CD4-positive, alpha-beta memory T cell (primary cell): ENCODE measurements at regions of chr10 and their contacts with region 1.

Region 1: DNA sequence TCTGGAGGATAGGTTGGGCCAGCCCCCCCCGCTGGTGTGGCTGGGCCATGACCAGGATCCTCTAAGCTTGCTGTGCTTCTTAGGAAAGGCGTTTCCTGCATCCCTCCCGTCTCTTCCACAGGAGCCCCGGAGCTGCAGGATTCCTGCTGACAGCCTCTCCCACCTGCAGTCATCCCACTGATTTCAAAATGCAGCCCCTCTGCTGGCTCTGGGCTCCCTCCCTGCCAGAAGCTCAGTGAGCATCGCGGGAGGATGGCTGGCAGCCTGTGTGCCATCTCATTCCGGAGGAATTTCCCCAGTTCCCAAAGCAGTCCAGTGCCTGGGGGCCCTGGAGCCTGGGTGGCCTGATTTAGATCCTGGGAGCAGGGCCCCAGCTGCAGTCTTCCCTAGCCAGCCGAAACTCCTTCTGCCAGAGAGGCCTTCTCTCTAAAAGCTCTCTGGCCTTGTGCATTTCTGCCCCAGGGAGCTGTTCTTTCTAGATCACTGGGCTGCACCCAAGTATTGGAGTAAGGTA is 21.8 kb upstream of the GOLGA7B start:
- DNase-seq: no peak
- H3K4me3 ChIP-seq: no peak overlapping the region
- H3K4me3 Mint-ChIP-seq: no peak overlapping the region
- H3K27ac ChIP-seq: no peak overlapping the region
- H3K27ac Mint-ChIP-seq: peak overlapping the region in 2 of 7 donors; percentile 47 to 66
- H3K4me1 ChIP-seq: peaks cover 28% of the 10 kb centered on the region
- H3K4me1 Mint-ChIP-seq: peaks cover 18 to 34% (median 21%) of the 10 kb centered on the region in 4 donors
- H3K27me3 ChIP-seq: no peaks in the 10 kb centered on the region
- H3K27me3 Mint-ChIP-seq: no peaks in the 10 kb centered on the region

Region 2: DNA sequence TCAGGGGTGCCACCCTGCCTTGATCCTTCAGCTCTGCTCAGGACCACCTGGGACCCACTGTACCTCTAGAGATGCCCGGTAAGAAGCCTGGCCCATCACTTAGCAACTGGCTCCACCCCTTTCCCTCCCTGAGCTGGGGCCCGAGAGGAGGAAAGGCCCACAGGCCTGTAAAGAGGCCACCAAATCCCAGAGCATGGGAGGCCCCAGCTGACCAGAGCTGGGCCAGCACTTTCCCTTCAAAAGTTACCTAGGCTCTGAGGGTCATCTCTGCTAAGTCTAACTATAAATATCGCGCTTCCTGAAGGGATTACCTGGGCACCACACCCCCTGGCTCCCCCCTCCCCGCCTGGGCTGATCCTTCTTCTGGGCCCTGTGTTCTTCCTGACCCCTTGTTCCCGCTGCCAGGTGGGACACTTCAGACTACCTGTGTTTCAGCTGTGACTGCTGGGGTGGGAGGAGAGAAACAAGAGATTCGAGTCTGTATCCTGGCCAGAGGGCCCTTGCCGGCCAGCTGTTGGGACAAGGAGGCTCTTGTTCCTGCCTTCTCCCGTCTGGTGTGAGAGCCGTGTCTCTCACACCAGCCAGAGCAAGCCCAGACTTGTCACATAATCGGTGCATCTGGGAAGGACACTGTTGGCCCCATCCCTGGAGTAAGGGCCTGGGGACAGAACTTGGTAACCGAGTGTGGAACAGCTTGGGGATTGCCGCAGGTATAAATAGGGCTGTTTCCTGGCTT is 278.1 kb before region 1 on chr10:
- CTCF ChIA-PET with region 1: no interaction called
- POLR2A ChIA-PET with region 1: no interaction called
- intact Hi-C with region 1: no loop called
- DNase-seq: no peak
- H3K4me3 ChIP-seq: no peak overlapping the region
- H3K4me3 Mint-ChIP-seq: no peak overlapping the region
- H3K27ac ChIP-seq: no peak overlapping the region
- H3K27ac Mint-ChIP-seq: peak overlapping the region in 1 of 7 donors; percentile 2
- H3K4me1 ChIP-seq: no peaks in the 10 kb centered on the region
- H3K4me1 Mint-ChIP-seq: peaks cover 0 to 3% (median under 1%) of the 10 kb centered on the region in 4 donors
- H3K27me3 ChIP-seq: no peaks in the 10 kb centered on the region
- H3K27me3 Mint-ChIP-seq: no peaks in the 10 kb centered on the region

Region 3: DNA sequence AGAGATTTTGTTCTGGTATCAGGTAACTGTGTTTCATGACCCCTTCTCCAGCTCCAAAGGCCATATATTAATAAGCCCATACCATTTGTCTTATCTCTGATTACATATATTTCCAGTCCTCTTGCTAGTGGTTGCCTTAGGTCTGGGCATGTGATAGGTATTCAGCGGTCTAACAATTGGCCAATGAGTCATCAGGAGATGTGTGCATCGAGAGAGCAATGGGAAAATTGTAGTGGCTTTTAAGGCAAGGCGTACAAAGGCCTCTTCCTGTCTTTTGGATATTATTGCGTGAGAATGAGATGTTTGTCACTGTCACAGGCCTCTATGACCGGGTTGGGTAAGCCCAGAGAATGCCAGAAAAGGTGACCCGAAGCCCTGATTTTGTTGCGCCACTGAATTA is 17.4 kb before region 1 on chr10:
- CTCF ChIA-PET with region 1: no interaction called
- POLR2A ChIA-PET with region 1: no interaction called
- intact Hi-C with region 1: no loop called
- DNase-seq: no peak
- H3K4me3 ChIP-seq: no peak overlapping the region
- H3K4me3 Mint-ChIP-seq: no peak overlapping the region
- H3K27ac ChIP-seq: no peak overlapping the region
- H3K27ac Mint-ChIP-seq: no peak overlapping the region
- H3K4me1 ChIP-seq: no peaks in the 10 kb centered on the region
- H3K4me1 Mint-ChIP-seq: peaks cover 0 to 4% (median 0%) of the 10 kb centered on the region in 4 donors
- H3K27me3 ChIP-seq: no peaks in the 10 kb centered on the region
- H3K27me3 Mint-ChIP-seq: no peaks in the 10 kb centered on the region

Region 4: DNA sequence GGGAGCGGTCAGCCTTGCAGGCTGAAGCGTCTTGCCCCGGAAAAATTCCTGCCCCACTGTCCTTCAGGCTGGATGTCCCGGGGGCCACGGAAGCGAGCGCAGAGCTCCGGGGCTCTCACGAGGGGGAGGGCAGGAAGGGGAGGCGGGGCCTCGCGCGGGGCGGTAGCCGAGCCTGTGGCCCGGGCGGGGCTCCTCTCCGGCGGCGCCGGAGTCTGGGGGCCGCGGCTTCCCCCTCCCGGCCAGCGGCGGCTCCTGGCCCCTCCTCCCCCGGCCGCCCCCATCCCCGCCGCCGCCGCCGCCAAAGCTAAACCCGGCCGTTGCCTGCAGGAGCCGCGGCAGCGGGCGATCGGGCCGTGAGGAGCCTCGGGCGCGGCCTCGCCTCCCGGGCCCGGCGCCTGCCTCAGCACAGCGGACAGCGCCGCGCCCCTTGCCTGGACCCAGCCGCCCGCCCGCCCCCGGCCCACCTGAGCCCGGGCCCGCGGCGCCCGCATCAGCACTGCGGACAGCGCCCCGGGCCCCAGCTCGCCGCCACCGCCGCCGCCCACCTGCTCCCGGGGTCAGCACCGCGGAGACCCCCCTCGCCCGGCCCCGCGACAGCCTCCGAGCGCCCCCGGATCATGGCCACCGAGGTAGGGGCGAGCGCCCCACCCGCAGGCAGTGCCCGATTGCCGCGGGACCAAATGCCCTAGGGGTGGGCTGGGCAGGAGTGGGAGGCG is 22.0 kb after region 1 on chr10 and contains the start of gene GOLGA7B:
- CTCF ChIA-PET with region 1: interaction called, 3 read pairs
- POLR2A ChIA-PET with region 1: interaction called, 23 read pairs
- intact Hi-C with region 1: no loop called
- DNase-seq: peak; percentile 60 to 72 (median 70)
- H3K4me3 ChIP-seq: peak within 1 kb of the TSS; percentile 76 to 79
- H3K4me3 Mint-ChIP-seq: peak within 1 kb of the TSS; percentile 92 to 98 (median 94)
- H3K27ac ChIP-seq: peak within 1 kb of the TSS; percentile 32
- H3K27ac Mint-ChIP-seq: peak within 1 kb of the TSS; percentile 87 to 94 (median 91)
- H3K4me1 ChIP-seq: peaks cover 40% of the 10 kb centered on the region
- H3K4me1 Mint-ChIP-seq: peaks cover 29 to 46% (median 39%) of the 10 kb centered on the region in 4 donors
- H3K27me3 ChIP-seq: no peaks in the 10 kb centered on the region
- H3K27me3 Mint-ChIP-seq: no peaks in the 10 kb centered on the region
- total RNA-seq, gene GOLGA7B: 7.6 to 7.9 TPM